BJ (cell line): ENCODE measurements at regions of chr1 and their contacts with region 1.

Region 1: DNA sequence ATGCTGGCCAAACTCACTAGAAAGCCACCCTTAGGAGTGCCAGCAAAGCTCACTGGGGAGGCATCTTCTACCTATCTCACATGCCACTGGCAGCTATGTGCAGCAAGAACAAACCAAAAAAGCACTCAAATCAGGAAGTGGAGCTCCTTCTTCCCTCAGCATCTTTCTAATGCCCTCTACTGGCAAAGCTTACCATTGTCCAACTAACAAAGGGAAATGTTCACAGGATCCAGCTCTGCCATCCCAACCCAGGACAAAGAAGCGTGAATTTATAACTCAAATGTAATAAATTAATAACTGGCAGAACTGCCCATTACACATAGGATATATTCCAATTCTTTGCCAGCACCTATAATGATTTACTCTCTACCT is 38.9 kb downstream of the LEPR start:
- DNase-seq: no peak
- H3K4me3 ChIP-seq: no peak overlapping the region
- H3K27me3 ChIP-seq: no peaks in the 10 kb centered on the region
- CTCF ChIP-seq: peak; percentile 72

Region 2: GRCh38 chr1:65235867-65236805 is 223.2 kb before region 1 on chr1:
- CTCF ChIA-PET with region 1: interaction called, 11 read pairs
- POLR2A ChIA-PET with region 1: no interaction called
- DNase-seq: no peak
- H3K4me3 ChIP-seq: no peak overlapping the region
- H3K27me3 ChIP-seq: no peaks in the 10 kb centered on the region
- CTCF ChIP-seq: peak; percentile 53

Region 3: GRCh38 chr1:65431111-65431705 is 28.2 kb before region 1 on chr1:
- CTCF ChIA-PET with region 1: interaction called, 11 read pairs
- POLR2A ChIA-PET with region 1: interaction called, 4 read pairs
- DNase-seq: no peak
- H3K4me3 ChIP-seq: no peak overlapping the region
- H3K27me3 ChIP-seq: no peaks in the 10 kb centered on the region
- CTCF ChIP-seq: peak; percentile 61

Region 4: GRCh38 chr1:65440915-65441314 is 18.5 kb before region 1 on chr1:
- CTCF ChIA-PET with region 1: interaction called, 11 read pairs
- POLR2A ChIA-PET with region 1: interaction called, 4 read pairs
- DNase-seq: peak; percentile 67
- H3K4me3 ChIP-seq: no peak overlapping the region
- H3K27me3 ChIP-seq: no peaks in the 10 kb centered on the region
- CTCF ChIP-seq: no peak